Activated CD4-positive, alpha-beta memory T cell treated with anti-CD3 and anti-CD28 coated beads for 36 hours (primary cell): ENCODE measurements at regions of chr12 and their contacts with region 1.

Region 1: DNA sequence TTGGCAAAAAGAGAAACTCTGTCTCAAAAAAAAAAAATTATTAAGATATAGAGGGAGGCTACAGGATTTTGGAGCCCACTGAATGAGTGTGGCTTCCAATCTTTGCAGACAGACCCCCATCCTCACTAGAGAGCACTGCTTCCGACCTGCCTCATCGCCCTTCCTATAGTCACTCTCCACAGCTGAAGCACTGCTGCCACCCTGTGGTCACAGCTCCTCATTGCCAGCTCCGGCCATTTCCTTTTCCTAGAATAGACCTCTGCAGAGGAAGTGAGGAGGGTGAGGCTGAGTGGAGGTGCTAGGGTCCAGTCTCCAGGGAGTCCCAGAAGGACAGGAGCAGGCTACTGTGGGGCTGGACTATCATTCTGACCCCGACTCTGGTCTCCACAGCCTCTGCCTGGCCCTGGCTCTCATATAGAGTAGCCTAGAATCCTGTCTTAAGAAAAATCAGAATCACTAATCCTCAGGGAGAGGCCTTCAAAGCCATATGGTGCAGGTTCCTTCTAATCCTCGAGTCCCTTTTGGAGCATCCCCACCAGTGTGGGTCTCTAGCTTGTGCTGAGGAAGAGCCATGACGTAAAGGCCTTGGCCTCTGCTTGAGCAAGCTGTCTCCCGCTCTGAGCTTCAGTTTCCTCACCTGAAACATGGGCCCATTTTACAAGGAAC is 1.4 kb upstream of the NPFF start:
- DNase-seq: peak; percentile 92
- H3K4me3 Mint-ChIP-seq: no peak overlapping the region
- H3K27ac Mint-ChIP-seq: peak overlapping the region; percentile 67
- H3K4me1 Mint-ChIP-seq: peaks cover 12% of the 10 kb centered on the region
- H3K27me3 Mint-ChIP-seq: no peaks in the 10 kb centered on the region

Region 2: DNA sequence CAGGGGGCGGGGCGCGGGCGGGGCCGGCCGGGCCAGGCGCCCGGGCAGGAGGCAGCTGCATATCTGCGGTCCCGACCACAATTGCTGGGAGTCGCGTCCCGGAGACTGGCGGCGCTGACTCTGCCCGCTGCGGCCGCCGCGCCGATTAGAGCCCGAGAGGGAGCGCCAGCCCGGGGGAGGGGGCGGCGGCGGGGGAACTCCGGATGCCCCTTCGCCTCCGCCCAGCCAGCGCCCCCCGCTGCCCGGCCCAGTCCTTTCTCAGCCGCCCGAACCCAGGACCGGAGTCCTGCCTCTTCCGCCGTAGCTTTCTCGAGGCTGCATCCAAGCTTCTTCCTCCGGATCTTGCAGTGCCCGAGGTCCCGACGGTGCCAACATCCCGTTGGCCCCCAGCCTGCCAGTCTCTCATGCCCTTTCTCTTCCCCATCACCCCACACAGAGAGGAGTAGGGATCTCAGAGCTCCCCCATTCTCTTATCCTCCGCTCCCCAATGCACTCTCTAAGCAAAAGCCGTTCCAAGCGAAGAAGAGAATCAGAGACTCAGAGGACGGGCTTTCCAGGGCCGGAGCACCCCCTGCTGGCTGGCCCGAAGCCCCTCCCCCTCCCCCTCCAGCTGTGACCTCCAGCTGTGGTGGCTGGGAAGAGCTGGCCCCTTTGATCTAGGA is 163.7 kb before region 1 on chr12:
- CTCF ChIA-PET with region 1: interaction called, 10 read pairs
- POLR2A ChIA-PET with region 1: no interaction called
- intact Hi-C with region 1: no loop called
- DNase-seq: peak; percentile 86
- H3K4me3 Mint-ChIP-seq: peak overlapping the region; percentile 92
- H3K27ac Mint-ChIP-seq: peak overlapping the region; percentile 56
- H3K4me1 Mint-ChIP-seq: peaks cover 14% of the 10 kb centered on the region
- H3K27me3 Mint-ChIP-seq: no peaks in the 10 kb centered on the region

Region 3: GRCh38 chr12:53427905-53428594 is 80.6 kb before region 1 on chr12:
- CTCF ChIA-PET with region 1: interaction called, 16 read pairs
- POLR2A ChIA-PET with region 1: no interaction called
- intact Hi-C with region 1: no loop called
- DNase-seq: peak; percentile 69
- H3K4me3 Mint-ChIP-seq: no peak overlapping the region
- H3K27ac Mint-ChIP-seq: no peak overlapping the region
- H3K4me1 Mint-ChIP-seq: peaks cover 14% of the 10 kb centered on the region
- H3K27me3 Mint-ChIP-seq: no peaks in the 10 kb centered on the region

Region 4: DNA sequence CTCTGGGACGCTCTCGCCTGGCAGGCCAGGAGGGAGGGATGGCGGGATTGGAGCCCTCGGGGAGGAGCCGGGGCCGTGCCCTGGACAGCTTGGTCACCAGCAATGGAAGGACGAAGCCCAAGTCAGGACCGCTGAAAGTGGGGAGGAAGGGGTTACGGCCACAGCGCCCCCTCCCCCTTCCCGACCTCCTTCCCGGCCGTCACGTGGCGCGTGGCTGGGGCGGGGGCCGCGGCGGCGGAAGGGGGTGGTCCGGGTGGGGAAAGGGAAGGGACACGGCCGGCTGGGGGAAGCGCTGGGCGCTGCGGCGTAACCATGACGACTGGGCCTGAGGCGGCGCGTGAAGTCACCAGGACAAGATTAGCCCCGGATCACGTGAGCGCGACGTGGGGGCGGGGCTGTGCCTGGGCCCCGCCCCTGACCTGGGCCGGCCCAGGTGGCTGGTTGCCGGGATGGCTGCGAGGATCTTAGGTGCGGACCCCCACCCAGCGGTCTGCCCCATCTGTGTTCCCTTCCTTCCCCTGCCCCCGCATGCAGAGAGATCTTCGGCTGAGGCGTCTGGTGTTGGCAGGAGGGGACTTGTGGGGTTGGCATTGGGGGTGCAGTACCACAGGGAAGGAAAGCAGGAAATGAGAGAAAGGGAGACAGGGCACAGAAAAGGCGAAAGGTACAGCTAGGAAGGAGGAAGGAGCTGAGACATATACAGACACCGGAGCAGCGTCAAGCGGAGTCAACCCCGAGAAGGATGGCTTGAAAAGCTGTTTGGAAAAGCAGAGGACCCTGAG is 15.6 kb before region 1 on chr12:
- CTCF ChIA-PET with region 1: interaction called, 20 read pairs
- POLR2A ChIA-PET with region 1: no interaction called
- intact Hi-C with region 1: no loop called
- DNase-seq: peak; percentile 92
- H3K4me3 Mint-ChIP-seq: peak overlapping the region; percentile 80
- H3K27ac Mint-ChIP-seq: peak overlapping the region; percentile 76
- H3K4me1 Mint-ChIP-seq: peaks cover 26% of the 10 kb centered on the region
- H3K27me3 Mint-ChIP-seq: no peaks in the 10 kb centered on the region